ENCODE measurements at regions of chr15 and their contacts with region 1.

Region 1: GRCh38 chr15:44426975-44427755 is at the start of gene CTDSPL2:
- DNase-seq: peak; percentile 97 to 98
- ATAC-seq: peak; percentile 97 to 99 (median 98)
- H3K4me3 ChIP-seq: peak within 1 kb of the TSS; percentile 78 to 95 (median 86)
- H3K27ac ChIP-seq: peak within 1 kb of the TSS; percentile 87 to 98 (median 92)
- H3K4me1 ChIP-seq: peaks cover 6 to 40% (median 35%) of the 10 kb centered on the region in 9 donors
- H3K27me3 ChIP-seq: no peaks in the 10 kb centered on the region
- CTCF ChIP-seq: peak in 6 of 9 donors; percentile 23 to 72 (median 56)
- total RNA-seq, gene CTDSPL2: 12.9 to 22.3 (median 19.1) TPM

Region 2: GRCh38 chr15:44092221-44092620 is 334.9 kb before region 1 on chr15:
- intact Hi-C with region 1: no loop called
- DNase-seq: no peak
- ATAC-seq: peak in 2 of 8 donors; percentile 29 to 44
- H3K4me3 ChIP-seq: no peak overlapping the region
- H3K27ac ChIP-seq: no peak overlapping the region
- H3K4me1 ChIP-seq: peaks cover 0 to 13% (median 0%) of the 10 kb centered on the region in 9 donors
- H3K27me3 ChIP-seq: no peaks in the 10 kb centered on the region
- CTCF ChIP-seq: no peak

Region 3: GRCh38 chr15:44286814-44287452 is 140.2 kb before region 1 on chr15:
- intact Hi-C with region 1: loop called in 3 of 10 experiments (anchors 2 to 10 kb)
- DNase-seq: no peak
- ATAC-seq: no peak
- H3K4me3 ChIP-seq: peak overlapping the region in 9 of 10 donors; percentile 59 to 100 (median 93)
- H3K27ac ChIP-seq: peak overlapping the region in 8 of 10 donors; percentile 81 to 95 (median 90)
- H3K4me1 ChIP-seq: peaks cover 0 to 38% (median 26%) of the 10 kb centered on the region in 9 donors
- H3K27me3 ChIP-seq: no peaks in the 10 kb centered on the region
- CTCF ChIP-seq: peak in 4 of 9 donors; percentile 4 to 39 (median 12)

Region 4: DNA sequence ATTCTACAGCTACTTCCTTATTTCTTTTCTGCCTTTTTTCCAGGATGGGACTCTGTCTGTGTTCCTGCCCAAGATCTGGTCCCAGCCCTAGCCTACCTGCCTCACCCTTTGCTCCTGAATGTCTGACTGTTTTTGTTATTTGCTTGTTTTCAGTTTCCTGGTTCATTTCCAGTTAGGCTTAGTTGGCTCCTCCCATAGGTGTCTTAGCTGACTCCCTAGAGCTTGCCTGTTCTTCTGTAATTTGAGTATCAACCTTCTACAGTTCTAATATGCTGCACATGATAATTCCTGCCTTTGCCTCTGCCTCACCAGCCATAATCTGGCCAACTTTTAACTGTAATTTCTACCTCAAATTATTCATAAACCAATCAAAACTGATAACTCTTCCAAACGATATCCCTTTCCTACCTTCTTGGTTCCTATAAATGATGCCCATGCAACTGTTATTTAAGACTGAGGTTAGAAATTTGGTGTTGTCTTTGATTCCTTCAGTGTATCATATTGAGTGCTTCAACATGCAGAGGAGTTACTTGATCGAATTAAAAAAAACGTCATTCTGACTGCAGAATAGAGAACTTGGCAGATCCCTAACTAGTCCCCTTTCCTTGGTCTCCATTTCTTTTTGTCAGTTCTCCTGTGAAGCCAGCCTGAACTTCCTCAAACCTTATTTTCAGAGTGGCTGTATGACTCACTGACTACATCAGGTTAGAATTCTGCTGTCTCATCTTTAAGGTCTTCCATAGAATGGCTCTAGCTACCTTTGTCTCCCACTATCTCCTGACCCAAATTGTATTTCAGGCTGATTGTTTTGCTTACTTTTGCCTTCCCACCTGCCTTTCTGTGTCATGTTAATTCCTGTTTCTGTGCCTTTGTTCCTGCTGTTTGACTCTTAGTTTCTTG is 130.3 kb before region 1 on chr15:
- intact Hi-C with region 1: loop called in 1 of 10 experiments (anchors 10 kb)
- DNase-seq: no peak
- ATAC-seq: peak in 5 of 8 donors; percentile 31 to 71 (median 50)
- H3K4me3 ChIP-seq: no peak overlapping the region
- H3K27ac ChIP-seq: peak overlapping the region in 2 of 10 donors; percentile 36 to 76
- H3K4me1 ChIP-seq: peaks cover 0 to 35% (median 9%) of the 10 kb centered on the region in 9 donors
- H3K27me3 ChIP-seq: no peaks in the 10 kb centered on the region
- CTCF ChIP-seq: no peak

Region 5: GRCh38 chr15:44370830-44371229 is 56.3 kb before region 1 on chr15:
- intact Hi-C with region 1: no loop called
- DNase-seq: no peak
- ATAC-seq: no peak
- H3K4me3 ChIP-seq: no peak overlapping the region
- H3K27ac ChIP-seq: no peak overlapping the region
- H3K4me1 ChIP-seq: no peaks in the 10 kb centered on the region
- H3K27me3 ChIP-seq: no peaks in the 10 kb centered on the region
- CTCF ChIP-seq: no peak

Region 6: GRCh38 chr15:44501768-44502366 is 74.7 kb after region 1 on chr15:
- intact Hi-C with region 1: loop called in 1 of 10 experiments (anchors 5 kb)
- DNase-seq: no peak
- ATAC-seq: no peak
- H3K4me3 ChIP-seq: no peak overlapping the region
- H3K27ac ChIP-seq: no peak overlapping the region
- H3K4me1 ChIP-seq: no peaks in the 10 kb centered on the region
- H3K27me3 ChIP-seq: no peaks in the 10 kb centered on the region
- CTCF ChIP-seq: peak in 8 of 9 donors; percentile 16 to 67 (median 58)

Region 7: GRCh38 chr15:44536962-44537734 is 110.0 kb after region 1 on chr15 and contains the start of gene EIF3J:
- intact Hi-C with region 1: loop called in 2 of 10 experiments (anchors 5 kb)
- DNase-seq: peak; percentile 94 to 95
- ATAC-seq: peak; percentile 95 to 97 (median 96)
- H3K4me3 ChIP-seq: peak within 1 kb of the TSS; percentile 74 to 98 (median 90)
- H3K27ac ChIP-seq: peak within 1 kb of the TSS; percentile 92 to 99 (median 96)
- H3K4me1 ChIP-seq: peaks cover 0 to 52% (median 44%) of the 10 kb centered on the region in 9 donors
- H3K27me3 ChIP-seq: no peaks in the 10 kb centered on the region
- CTCF ChIP-seq: no peak
- total RNA-seq, gene EIF3J: 64.5 to 105 (median 81.4) TPM

Measured in heart right ventricle (tissue), 16 donors.